ENCODE measurements at regions of chr2 and their contacts with region 1.

Region 1: GRCh38 chr2:64151476-64151875 is 7.3 kb upstream of the PELI1 start:
- DNase-seq: no peak
- ATAC-seq: no peak
- H3K4me3 ChIP-seq: no peak overlapping the region
- H3K4me3 Mint-ChIP-seq: no peak overlapping the region
- H3K27ac ChIP-seq: no peak overlapping the region
- H3K27ac Mint-ChIP-seq: no peak overlapping the region
- H3K4me1 ChIP-seq: no peaks in the 10 kb centered on the region
- H3K4me1 Mint-ChIP-seq: peaks cover 9% of the 10 kb centered on the region
- H3K27me3 ChIP-seq: no peaks in the 10 kb centered on the region
- H3K27me3 Mint-ChIP-seq: no peaks in the 10 kb centered on the region
- CTCF ChIP-seq: no peak

Region 2: DNA sequence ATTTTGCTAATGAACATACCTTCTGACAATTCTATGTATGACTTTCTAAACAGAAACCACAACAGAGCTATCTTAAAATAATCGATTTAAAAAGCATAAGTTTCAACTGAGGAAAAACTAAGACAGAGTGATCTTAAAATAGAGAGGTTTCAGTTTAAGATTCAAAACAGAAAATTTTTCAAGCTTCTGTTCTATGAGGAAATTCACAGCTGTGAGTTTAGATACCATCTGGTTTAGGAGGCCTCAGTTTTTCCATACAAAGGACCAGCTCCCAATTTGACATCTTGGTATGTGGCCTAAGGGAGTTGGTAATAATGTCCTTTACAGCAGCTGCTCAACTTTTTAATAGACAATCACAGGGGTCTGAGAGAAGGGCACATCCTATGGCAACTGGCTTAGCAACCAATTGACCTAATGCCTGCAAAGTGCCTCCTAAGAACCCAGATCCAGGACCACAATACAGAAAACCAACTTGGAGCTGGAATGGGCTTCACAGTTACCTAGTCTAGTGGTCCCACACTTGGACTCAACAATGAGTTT is 523.0 kb before region 1 on chr2:
- CTCF ChIA-PET with region 1: no interaction called
- POLR2A ChIA-PET with region 1: no interaction called
- intact Hi-C with region 1: no loop called
- DNase-seq: no peak
- ATAC-seq: no peak
- H3K4me3 ChIP-seq: no peak overlapping the region
- H3K4me3 Mint-ChIP-seq: no peak overlapping the region
- H3K27ac ChIP-seq: no peak overlapping the region
- H3K27ac Mint-ChIP-seq: no peak overlapping the region
- H3K4me1 ChIP-seq: no peaks in the 10 kb centered on the region
- H3K4me1 Mint-ChIP-seq: no peaks in the 10 kb centered on the region
- H3K27me3 ChIP-seq: no peaks in the 10 kb centered on the region
- H3K27me3 Mint-ChIP-seq: peaks cover 8% of the 10 kb centered on the region
- CTCF ChIP-seq: no peak

Region 3: GRCh38 chr2:64036034-64036705 is 115.3 kb before region 1 on chr2:
- CTCF ChIA-PET with region 1: no interaction called
- POLR2A ChIA-PET with region 1: no interaction called
- intact Hi-C with region 1: no loop called
- DNase-seq: peak in 5 of 14 experiments; percentile 10 to 82 (median 74)
- ATAC-seq: peak; percentile 96
- H3K4me3 ChIP-seq: no peak overlapping the region
- H3K4me3 Mint-ChIP-seq: peak overlapping the region; percentile 70
- H3K27ac ChIP-seq: no peak overlapping the region
- H3K27ac Mint-ChIP-seq: peak overlapping the region; percentile 63
- H3K4me1 ChIP-seq: peaks cover 17% of the 10 kb centered on the region
- H3K4me1 Mint-ChIP-seq: peaks cover 51% of the 10 kb centered on the region
- H3K27me3 ChIP-seq: no peaks in the 10 kb centered on the region
- H3K27me3 Mint-ChIP-seq: no peaks in the 10 kb centered on the region
- CTCF ChIP-seq: no peak

Region 4: DNA sequence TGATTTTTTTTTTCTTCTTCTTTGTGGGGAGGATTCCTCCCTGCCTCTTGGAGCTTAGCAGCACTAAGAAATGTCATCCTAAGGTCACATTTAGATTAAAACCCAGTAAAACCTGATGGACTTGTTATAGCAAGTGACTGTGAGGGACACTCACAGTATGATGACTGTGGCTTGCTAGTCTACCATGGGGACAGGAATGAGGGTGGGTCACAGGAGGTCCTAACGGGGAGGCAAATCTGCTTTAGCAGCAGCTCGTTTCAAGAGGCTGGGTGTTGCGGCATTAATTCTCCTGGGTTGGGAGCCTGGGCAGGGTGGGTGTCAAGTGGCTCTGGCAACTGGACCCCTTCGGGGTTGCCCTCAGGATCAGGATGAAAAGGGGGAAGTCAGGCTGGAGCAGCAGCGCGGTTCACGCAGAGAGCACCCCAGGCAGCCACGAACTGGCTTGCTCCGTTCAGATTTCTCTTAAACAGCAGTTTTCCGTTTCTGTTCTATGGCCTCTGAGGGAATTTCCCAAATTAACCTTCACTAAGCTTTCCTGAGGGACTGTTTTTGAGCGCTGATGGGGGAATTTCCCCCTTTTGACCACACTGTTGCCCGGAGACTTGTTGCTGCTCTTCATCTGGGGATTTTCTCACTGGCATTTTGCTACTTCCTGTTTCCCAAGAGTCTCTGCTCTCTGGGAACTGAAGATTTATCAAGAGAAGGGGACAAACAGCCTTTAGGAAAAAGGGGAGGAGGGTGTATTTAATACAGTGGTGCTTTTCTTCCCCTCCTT is 52.6 kb after region 1 on chr2:
- CTCF ChIA-PET with region 1: interaction called, 3 read pairs
- POLR2A ChIA-PET with region 1: no interaction called
- intact Hi-C with region 1: loop called in 1 of 2 experiments (anchors 1 kb)
- DNase-seq: peak in 9 of 14 experiments; percentile 10 to 94 (median 18)
- ATAC-seq: peak; percentile 30
- H3K4me3 ChIP-seq: peak overlapping the region; percentile 42
- H3K4me3 Mint-ChIP-seq: peak overlapping the region; percentile 80
- H3K27ac ChIP-seq: peak overlapping the region; percentile 72 to 88
- H3K27ac Mint-ChIP-seq: peak overlapping the region; percentile 92
- H3K4me1 ChIP-seq: peaks cover 48% of the 10 kb centered on the region
- H3K4me1 Mint-ChIP-seq: peaks cover 90% of the 10 kb centered on the region
- H3K27me3 ChIP-seq: no peaks in the 10 kb centered on the region
- H3K27me3 Mint-ChIP-seq: no peaks in the 10 kb centered on the region
- CTCF ChIP-seq: no peak

Measured in CD4-positive, alpha-beta T cell (primary cell).